Activated CD4-positive, alpha-beta T cell treated with anti-CD3 and anti-CD28 coated beads, Interleukin-2, amount 10 ng/mL, durations not matched to agents 7 days and 5 days (primary cell): ENCODE measurements at regions of chr11 and their contacts with region 1.

Region 1: DNA sequence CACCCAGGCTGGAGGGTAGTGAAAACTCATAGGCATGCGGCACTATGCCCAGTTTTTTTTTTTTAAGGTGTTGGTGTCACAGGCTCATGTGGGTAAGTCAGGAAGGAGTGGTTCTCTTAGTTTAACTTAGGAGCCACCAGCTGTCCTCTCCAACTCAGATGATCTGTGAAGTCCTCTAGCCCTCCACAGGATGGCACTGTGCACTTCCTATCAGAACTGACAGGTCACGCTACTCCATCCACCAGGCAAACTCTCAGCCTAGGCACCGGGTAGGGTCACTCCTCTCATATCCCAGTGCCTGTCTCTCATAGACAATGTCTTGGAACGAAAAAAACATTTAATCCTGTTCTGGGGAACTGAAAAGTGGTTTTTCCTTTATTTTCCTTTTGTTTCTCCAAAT is 16.5 kb downstream of the NAP1L4 start:
- DNase-seq: peak; percentile 72
- H3K4me3 Mint-ChIP-seq: no peak overlapping the region
- H3K27ac Mint-ChIP-seq: peak overlapping the region; percentile 77
- H3K4me1 Mint-ChIP-seq: peaks cover 30% of the 10 kb centered on the region
- H3K27me3 Mint-ChIP-seq: no peaks in the 10 kb centered on the region

Region 2: GRCh38 chr11:3021125-3021524 is 45.5 kb after region 1 on chr11:
- CTCF ChIA-PET with region 1: interaction called, 10 read pairs
- POLR2A ChIA-PET with region 1: no interaction called
- DNase-seq: peak; percentile 46
- H3K4me3 Mint-ChIP-seq: no peak overlapping the region
- H3K27ac Mint-ChIP-seq: peak overlapping the region; percentile 57
- H3K4me1 Mint-ChIP-seq: peaks cover 65% of the 10 kb centered on the region
- H3K27me3 Mint-ChIP-seq: no peaks in the 10 kb centered on the region